Heart right ventricle (tissue), 16 donors: ENCODE measurements at regions of chr22 and their contacts with region 1.

Region 1: GRCh38 chr22:41015003-41015402 is 63.8 kb downstream of the RBX1 start:
- DNase-seq: no peak
- ATAC-seq: no peak
- H3K4me3 ChIP-seq: no peak overlapping the region
- H3K27ac ChIP-seq: no peak overlapping the region
- H3K4me1 ChIP-seq: peaks cover 0 to 13% (median 0%) of the 10 kb centered on the region in 9 donors
- H3K27me3 ChIP-seq: no peaks in the 10 kb centered on the region
- CTCF ChIP-seq: no peak

Region 2: GRCh38 chr22:40965936-40966725 is 48.9 kb before region 1 on chr22:
- intact Hi-C with region 1: loop called in 1 of 10 experiments (anchors 10 kb)
- DNase-seq: no peak
- ATAC-seq: peak in 7 of 8 donors; percentile 23 to 74 (median 53)
- H3K4me3 ChIP-seq: no peak overlapping the region
- H3K27ac ChIP-seq: peak overlapping the region in 8 of 10 donors; percentile 7 to 66 (median 21)
- H3K4me1 ChIP-seq: peaks cover 3 to 40% (median 23%) of the 10 kb centered on the region in 9 donors
- H3K27me3 ChIP-seq: no peaks in the 10 kb centered on the region
- CTCF ChIP-seq: no peak

Region 3: DNA sequence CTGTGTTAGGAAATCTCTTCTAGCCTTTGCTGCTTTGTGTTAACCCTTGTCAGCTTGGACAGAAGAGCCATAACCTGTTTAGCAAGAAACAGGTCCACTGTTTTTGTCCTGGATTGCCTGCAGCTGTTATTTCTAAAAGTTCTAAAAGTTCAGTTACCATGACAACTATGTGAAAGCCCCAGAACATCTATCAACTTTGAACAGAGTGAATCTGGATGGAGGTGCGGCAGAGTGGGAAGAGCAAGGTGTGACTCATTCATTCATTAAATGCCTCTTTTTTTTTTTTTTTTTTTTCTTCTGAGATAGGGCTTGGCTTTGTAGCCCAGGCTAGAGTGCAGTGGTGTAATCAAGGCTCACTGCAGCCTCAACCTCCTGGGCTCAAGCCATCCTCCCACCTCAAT is 13.3 kb before region 1 on chr22:
- intact Hi-C with region 1: no loop called
- DNase-seq: no peak
- ATAC-seq: no peak
- H3K4me3 ChIP-seq: no peak overlapping the region
- H3K27ac ChIP-seq: no peak overlapping the region
- H3K4me1 ChIP-seq: no peaks in the 10 kb centered on the region
- H3K27me3 ChIP-seq: no peaks in the 10 kb centered on the region
- CTCF ChIP-seq: no peak

Region 4: DNA sequence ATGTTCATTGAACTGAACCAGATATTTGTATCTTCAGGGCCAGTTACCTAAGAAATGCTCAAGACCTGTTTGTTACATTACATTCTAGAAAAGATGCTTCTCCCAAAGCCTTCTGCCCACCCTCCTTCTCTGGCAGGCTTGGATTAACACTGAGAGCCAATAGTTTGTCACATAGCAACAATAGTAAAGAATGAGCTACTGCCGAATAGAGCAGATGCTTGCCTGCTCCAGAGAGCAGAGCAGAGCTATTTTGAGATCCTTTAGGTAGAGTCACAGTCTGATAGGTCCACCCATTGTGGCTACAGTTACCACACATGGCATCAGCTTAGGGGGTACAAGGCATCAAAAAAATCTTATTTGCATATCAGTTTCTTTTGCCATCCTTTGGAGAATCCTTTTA is 63.9 kb after region 1 on chr22:
- intact Hi-C with region 1: loop called in 2 of 10 experiments (anchors 10 kb)
- DNase-seq: no peak
- ATAC-seq: peak in 6 of 8 donors; percentile 35 to 81 (median 50)
- H3K4me3 ChIP-seq: no peak overlapping the region
- H3K27ac ChIP-seq: no peak overlapping the region
- H3K4me1 ChIP-seq: no peaks in the 10 kb centered on the region
- H3K27me3 ChIP-seq: no peaks in the 10 kb centered on the region
- CTCF ChIP-seq: no peak

Region 5: DNA sequence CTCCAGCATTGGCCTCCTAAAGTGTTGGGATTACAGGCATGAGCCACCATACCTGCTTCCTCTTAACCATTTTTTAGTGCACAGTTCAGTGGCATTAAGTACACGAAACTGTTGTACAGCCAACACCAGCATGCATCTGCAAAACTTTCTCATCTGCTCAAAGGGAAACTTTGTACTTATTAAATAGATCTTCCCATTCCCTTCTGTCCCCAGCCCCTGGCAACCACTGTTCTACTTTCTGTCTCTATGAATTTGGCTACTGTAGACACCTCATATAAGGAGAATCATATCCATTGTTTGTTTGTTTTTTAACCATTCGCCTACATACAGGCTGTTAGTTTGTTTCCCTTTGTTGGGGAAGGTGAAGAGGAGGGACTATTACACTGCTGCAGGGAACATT is 70.8 kb after region 1 on chr22:
- intact Hi-C with region 1: loop called in 2 of 10 experiments (anchors 5 to 10 kb)
- DNase-seq: no peak
- ATAC-seq: no peak
- H3K4me3 ChIP-seq: no peak overlapping the region
- H3K27ac ChIP-seq: no peak overlapping the region
- H3K4me1 ChIP-seq: peaks cover 0 to 5% (median 0%) of the 10 kb centered on the region in 9 donors
- H3K27me3 ChIP-seq: no peaks in the 10 kb centered on the region
- CTCF ChIP-seq: no peak